HEK293 (cell line): ENCODE measurements at regions of chr7 and their contacts with region 1.

Region 1: DNA sequence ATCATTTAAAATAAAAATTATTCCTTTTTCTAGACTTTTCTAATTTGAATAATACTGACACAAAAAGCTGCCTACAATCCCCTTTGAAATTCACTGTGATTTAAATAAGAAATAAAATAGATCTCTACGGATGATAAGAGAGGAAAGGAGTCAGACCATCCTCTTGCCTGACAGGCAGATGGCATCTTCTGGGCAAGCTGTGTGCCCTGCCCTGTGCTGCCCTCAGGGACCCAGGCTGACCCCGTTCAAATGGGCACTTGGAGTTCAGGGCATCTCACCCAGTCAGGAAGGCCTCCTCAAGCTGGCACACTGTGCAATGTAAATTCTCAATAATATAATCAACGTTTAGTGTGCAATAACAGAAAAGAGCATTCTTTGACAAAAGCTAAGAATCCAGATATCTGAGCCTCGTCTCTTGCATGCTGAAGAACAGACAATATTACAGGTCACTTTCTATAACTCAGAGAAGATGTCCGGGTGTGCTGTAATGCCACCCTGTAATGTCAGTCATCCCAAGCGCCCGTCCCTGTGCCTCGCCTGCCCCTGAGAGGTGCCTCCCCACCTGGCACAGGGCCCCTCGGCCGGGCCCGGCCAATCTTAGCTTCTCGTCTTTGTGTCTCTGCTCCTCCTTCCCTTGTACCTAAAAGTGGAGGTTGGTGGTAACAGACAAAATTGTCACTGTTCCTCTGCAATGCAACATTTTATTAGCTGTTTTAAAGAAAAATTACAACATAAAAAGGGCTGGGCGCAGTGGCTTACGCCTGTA is 263.3 kb downstream of the COBL start:
- H3K4me3 ChIP-seq: no peak overlapping the region
- H3K27ac ChIP-seq: no peak overlapping the region
- H3K4me1 ChIP-seq: no peaks in the 10 kb centered on the region
- CTCF ChIP-seq: no peak

Region 2: DNA sequence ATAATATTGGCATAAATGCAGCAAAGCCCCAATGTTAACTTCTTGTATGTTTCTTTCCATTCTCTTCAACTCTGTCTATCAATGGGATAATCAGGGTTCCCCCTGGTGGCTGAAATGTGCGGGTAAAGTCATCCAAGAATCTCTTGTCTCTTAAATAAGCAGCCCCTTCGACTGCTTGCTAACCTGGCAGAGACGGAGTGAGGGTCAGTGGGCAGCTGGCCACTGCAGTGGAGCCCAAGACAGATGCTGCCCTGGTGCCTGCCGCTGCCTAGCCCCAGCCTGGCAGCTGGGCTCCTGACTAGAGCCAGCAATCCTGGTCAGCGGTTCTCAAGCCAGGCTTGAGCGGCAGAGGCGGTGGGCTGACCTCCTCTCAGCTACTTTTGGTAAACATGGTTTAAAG is 14.4 kb after region 1 on chr7:
- CTCF ChIA-PET with region 1: interaction called, 18 read pairs
- POLR2A ChIA-PET with region 1: no interaction called
- H3K4me3 ChIP-seq: no peak overlapping the region
- H3K27ac ChIP-seq: no peak overlapping the region
- H3K4me1 ChIP-seq: no peaks in the 10 kb centered on the region
- CTCF ChIP-seq: no peak

Region 3: DNA sequence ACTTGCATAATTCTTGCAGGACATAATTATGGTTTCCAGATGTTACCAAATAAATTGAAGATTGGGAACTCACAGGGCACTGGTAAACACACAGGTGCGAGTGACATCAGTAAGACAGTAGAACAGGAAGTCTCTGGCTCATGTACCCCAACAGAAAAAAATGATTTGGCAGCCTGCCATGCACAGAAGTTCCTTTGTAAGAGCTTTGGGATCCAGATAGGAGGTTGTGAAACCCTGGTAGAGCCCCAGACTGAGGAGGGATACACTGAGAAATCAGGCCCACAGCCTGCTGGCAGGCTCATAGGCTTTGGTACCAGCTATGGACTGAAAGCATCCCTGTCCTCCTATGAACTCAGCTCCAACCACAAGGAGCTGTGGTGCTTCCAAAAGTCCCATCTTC is 145.3 kb after region 1 on chr7:
- CTCF ChIA-PET with region 1: no interaction called
- POLR2A ChIA-PET with region 1: no interaction called
- H3K4me3 ChIP-seq: no peak overlapping the region
- H3K27ac ChIP-seq: no peak overlapping the region
- H3K4me1 ChIP-seq: no peaks in the 10 kb centered on the region
- CTCF ChIP-seq: no peak